ENCODE measurements at regions of chr12 and their contacts with region 1.

Region 1: GRCh38 chr12:21989819-21990412 is 48.7 kb upstream of the ABCC9 start:
- DNase-seq: peak; percentile 3
- H3K27ac ChIP-seq: no peak overlapping the region
- CTCF ChIP-seq: peak; percentile 18

Region 2: GRCh38 chr12:21697904-21698630 is 291.8 kb before region 1 on chr12:
- CTCF ChIA-PET with region 1: interaction called, 13 read pairs
- POLR2A ChIA-PET with region 1: no interaction called
- DNase-seq: no peak
- H3K27ac ChIP-seq: no peak overlapping the region
- CTCF ChIP-seq: peak; percentile 35; the same call in 1 of the 2 replicates

Measured in RWPE1 (cell line).